ENCODE measurements at regions of chr10 and their contacts with region 1.

Region 1: DNA sequence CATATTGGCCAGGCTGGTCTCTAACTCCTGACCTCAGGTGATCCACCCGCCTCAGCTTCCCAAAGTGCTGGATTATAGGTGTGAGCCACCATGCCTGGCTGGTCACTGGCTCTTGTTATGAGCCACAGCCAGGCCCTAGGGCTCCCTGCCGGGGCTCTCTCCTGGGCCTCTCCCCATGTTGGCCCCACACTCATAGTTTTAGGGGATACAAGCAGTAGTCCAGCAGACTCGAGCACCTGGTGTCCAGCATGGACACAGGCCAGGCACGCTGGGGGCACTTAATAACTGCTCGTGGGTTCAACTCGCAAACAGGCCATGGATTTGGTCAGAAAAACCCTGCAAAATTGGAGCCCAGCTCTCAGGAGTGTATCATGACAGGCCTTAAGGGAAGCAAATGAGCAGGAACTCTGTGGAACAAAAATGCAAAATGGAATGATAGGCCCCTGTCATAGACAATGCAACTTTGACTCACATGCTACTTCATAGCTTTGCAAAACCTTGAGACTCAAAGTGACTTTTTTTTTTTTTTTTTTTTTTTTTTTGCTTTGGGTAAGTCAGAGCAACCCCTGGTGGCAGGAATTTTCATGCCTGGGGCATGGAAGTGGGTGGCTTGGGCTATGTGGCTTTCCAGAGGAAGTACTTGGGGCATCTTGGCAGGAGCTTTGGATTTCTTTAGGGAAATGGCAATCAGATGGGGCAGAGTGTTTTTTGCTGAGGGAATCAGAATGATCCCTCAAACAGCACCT is 62.5 kb downstream of the TACC2 start:
- DNase-seq: peak; percentile 39
- H3K4me3 ChIP-seq: no peak overlapping the region
- H3K27me3 ChIP-seq: no peaks in the 10 kb centered on the region
- CTCF ChIP-seq: peak; percentile 82

Region 2: DNA sequence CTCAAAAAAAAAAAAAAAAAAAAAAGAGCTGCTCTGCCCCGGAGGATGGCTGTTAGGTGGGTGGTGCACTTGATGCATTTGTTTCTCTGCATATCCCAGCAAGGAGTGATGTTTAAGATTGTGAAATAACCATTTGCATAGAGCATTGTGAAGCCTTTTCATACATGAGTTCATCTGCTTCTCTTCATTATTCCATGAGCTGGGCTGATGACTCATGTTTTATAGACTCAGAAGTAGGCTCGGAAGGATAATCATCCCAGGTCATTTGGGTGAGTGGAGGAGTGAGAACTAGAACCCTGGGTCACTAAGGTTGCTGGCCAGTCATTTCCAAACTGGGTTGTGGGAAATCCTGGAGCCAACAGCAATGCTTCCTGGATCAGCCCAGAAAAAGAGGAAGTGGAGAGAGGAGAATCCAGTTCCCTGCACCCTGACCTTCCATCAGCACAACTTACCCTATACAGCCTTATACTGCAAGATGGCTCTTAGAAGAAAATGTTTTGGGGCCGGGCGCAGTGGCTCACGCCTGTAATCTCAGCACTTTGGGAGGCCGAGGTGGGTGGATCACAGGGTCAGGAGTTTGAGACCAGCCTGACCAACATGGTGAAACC is 17.2 kb before region 1 on chr10:
- CTCF ChIA-PET with region 1: interaction called, 10 read pairs
- POLR2A ChIA-PET with region 1: no interaction called
- DNase-seq: no peak
- H3K4me3 ChIP-seq: no peak overlapping the region
- H3K27me3 ChIP-seq: peaks cover 2% of the 10 kb centered on the region; the same call in 1 of the 2 replicates
- CTCF ChIP-seq: no peak

Region 3: GRCh38 chr10:122062831-122063674 is 11.6 kb after region 1 on chr10:
- CTCF ChIA-PET with region 1: interaction called, 17 read pairs
- POLR2A ChIA-PET with region 1: interaction called, 4 read pairs
- DNase-seq: peak; percentile 88
- H3K4me3 ChIP-seq: no peak overlapping the region
- H3K27me3 ChIP-seq: no peaks in the 10 kb centered on the region
- CTCF ChIP-seq: no peak

Measured in BJ (cell line).